ENCODE measurements at regions of chr21 and their contacts with region 1.

Region 1: DNA sequence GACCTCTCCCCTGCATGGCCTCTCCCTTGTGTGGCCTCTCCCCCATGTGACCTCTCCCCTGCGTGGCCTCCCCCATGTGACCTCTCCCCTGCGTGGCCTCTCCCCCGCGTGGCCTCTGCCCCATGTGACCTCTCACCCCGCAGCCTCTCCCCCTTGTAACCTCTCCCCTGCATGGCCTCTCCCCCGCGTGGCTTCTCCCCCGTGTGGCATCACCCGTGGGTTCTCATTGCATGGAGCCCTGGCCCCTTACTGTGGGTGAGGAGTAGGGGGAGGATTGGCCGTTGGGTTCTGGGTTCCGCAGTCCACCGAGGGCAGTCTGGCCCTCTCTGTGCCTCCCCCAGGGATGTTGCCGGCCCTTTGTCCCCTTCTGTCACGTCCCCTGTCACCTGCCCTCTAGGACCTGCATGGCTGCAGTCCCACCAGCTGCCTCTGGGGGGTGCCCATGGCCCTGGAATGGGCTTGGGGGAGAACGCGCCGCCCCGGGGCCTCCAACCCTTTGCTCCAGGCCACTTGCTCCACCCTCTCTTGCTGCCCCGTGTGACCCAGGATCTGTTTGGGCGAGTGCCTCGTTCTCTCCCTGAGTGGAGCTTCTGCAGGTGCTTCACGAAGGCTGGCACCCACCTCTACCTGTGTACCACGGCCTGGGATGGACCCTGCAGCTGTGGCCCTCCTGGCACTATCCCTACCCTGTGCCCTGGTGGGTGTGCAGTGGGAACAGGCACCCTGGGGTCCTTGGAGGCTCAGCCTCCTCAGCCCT is 21.3 kb downstream of the RRP1 start:
- DNase-seq: peak; percentile 98
- ATAC-seq: peak; percentile 77
- H3K4me3 Mint-ChIP-seq: no peak overlapping the region
- H3K27ac Mint-ChIP-seq: no peak overlapping the region
- H3K4me1 Mint-ChIP-seq: peaks cover 22% of the 10 kb centered on the region
- H3K27me3 Mint-ChIP-seq: no peaks in the 10 kb centered on the region
- CTCF ChIP-seq: peak; percentile 97

Region 2: GRCh38 chr21:43775795-43776430 is 34.8 kb before region 1 on chr21 and contains the start of gene CSTB:
- CTCF ChIA-PET with region 1: no interaction called
- POLR2A ChIA-PET with region 1: no interaction called
- DNase-seq: peak; percentile 83
- ATAC-seq: peak; percentile 68
- H3K4me3 Mint-ChIP-seq: peak within 1 kb of the TSS; percentile 92
- H3K27ac Mint-ChIP-seq: peak within 1 kb of the TSS; percentile 76
- H3K4me1 Mint-ChIP-seq: peaks cover 52% of the 10 kb centered on the region
- H3K27me3 Mint-ChIP-seq: peaks cover 2% of the 10 kb centered on the region; the same call in 1 of the 2 replicates
- CTCF ChIP-seq: no peak
- total RNA-seq, gene CSTB: 35.2 to 38.6 TPM (median 36.1 TPM) in 3 replicates

Region 3: GRCh38 chr21:43975495-43975993 is 164.9 kb after region 1 on chr21:
- CTCF ChIA-PET with region 1: interaction called, 15 read pairs
- POLR2A ChIA-PET with region 1: no interaction called
- DNase-seq: peak; percentile 87
- ATAC-seq: peak; percentile 86
- H3K4me3 Mint-ChIP-seq: peak overlapping the region; percentile 59
- H3K27ac Mint-ChIP-seq: 0 out of 2 replicates have a peak overlapping the region, but pooled peaks have one; percentile 76
- H3K4me1 Mint-ChIP-seq: no peaks in the 10 kb centered on the region
- H3K27me3 Mint-ChIP-seq: no peaks in the 10 kb centered on the region
- CTCF ChIP-seq: peak; percentile 83

Measured in WTC11 (cell line).